Pancreas (tissue), 10 donors: ENCODE measurements at regions of chr19 and their contacts with region 1.

Region 1: DNA sequence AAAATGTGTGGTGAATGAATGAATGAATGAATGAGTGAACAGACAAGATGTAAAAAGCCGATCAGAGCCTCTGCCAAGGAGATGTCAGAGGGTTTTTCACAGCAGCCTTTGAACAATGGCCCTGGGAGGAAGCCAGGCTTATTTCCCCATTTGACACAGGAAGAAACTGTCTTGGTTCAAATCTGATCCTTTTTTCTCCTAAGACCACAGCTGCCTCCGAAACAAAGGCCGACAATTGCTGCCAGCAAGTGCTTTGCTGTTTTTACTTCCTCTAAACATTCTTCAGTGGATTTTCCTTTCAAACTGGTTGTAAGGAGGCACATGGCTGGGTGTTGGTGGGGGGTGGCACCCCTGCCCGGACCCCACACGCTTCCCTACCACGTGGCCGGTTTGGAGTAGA is 44.2 kb upstream of the HOMER3 start:
- DNase-seq: no peak
- ATAC-seq: peak in 1 of 4 donors; percentile 44
- H3K4me3 ChIP-seq: no peak overlapping the region
- H3K27ac ChIP-seq: peak overlapping the region in 1 of 4 donors; percentile 30
- H3K4me1 ChIP-seq: no peaks in the 10 kb centered on the region
- H3K27me3 ChIP-seq: no peaks in the 10 kb centered on the region
- CTCF ChIP-seq: no peak

Region 2: DNA sequence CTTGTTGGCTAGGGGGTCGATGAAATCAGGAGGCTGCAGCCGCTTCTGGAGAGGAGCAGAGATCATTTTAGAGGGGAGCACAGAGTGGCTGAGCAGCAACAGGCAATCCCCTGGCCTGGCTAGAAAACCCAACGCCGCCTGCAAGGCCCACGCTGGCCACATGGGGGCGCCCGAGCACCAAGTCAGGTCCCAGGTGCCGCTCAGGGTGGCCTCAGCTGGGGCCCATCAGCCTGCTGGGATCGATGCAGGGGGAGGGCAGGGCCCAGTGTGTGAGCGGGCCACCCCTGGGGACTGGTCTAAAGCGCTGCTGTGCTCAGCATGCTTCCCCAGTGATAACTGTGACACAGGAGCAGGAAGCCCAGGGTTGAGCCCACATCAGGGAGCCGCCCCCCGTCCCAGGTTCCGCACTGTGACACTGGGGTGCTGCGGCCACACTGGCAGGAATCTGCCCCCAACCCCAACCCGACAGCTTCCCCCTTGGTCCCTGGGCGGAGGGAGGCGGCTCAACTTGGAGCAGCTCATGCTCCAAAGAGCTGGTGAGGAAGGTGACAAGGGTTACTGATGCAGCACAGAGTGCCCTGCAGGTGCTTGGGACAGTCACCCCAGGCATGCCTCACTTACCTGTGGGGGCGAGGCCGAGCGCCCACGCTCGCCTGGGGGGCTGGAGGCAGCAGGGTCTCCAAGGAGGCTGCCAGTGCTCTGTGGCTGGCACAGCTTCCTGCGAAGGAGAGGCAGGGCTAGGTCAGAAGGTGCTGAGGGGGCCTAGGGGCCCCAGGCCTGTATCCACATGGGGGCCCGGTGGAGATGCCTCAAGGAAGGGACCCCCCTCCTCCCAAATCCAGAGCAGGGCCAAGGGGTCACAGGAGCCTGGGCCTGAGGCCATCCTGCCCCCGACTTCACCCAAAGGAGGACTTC is 534.1 kb before region 1 on chr19:
- intact Hi-C with region 1: loop called in 1 of 3 experiments (anchors 10 kb)
- DNase-seq: peak in 5 of 6 donors; percentile 79 to 97 (median 91)
- ATAC-seq: peak; percentile 85 to 96 (median 90)
- H3K4me3 ChIP-seq: no peak overlapping the region
- H3K27ac ChIP-seq: no peak overlapping the region
- H3K4me1 ChIP-seq: peaks cover 0 to 4% (median 0%) of the 10 kb centered on the region in 3 donors
- H3K27me3 ChIP-seq: no peaks in the 10 kb centered on the region
- CTCF ChIP-seq: peak; percentile 94 to 99 (median 98)

Region 3: DNA sequence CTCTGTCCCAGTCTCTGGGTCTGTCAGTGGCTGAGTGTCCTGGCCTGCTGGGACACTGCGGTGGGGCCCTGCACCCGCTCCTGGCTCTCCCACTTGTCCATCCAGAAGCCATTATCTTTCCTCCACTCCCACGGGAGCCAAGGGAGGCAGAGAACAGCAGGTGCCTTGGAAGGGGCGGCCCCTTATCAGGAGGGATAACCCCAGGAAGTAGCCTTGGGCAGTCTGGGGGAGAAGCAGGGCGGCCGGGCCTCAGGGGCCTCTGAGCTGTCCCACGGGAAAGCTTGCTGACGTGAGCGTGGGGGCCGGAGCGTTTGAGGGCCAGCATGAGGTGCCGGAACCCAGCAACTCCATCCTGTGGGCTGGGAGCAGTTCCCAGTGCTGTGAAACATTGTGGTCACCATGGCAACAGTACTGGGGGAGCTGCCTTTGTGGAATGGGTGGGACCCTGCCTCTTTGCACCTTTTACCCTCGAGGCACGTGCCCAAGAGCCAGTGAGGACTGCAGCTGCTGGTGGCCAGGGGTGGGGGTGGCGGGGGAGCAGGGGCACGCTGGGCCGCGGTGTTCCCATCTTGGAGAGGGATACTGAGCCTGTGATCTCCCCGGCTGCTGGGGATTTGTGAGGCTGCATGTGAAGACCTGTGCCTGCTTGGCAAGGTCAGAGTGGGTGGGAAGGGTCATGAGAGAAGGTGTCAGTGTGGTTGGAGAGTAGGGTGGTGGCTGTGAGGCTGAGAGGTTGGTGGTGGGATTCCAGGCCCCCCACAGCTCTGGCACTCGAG is 327.5 kb before region 1 on chr19:
- intact Hi-C with region 1: no loop called
- DNase-seq: no peak
- ATAC-seq: peak in 1 of 4 donors; percentile 32
- H3K4me3 ChIP-seq: no peak overlapping the region
- H3K27ac ChIP-seq: no peak overlapping the region
- H3K4me1 ChIP-seq: no peaks in the 10 kb centered on the region
- H3K27me3 ChIP-seq: no peaks in the 10 kb centered on the region
- CTCF ChIP-seq: no peak

Region 4: DNA sequence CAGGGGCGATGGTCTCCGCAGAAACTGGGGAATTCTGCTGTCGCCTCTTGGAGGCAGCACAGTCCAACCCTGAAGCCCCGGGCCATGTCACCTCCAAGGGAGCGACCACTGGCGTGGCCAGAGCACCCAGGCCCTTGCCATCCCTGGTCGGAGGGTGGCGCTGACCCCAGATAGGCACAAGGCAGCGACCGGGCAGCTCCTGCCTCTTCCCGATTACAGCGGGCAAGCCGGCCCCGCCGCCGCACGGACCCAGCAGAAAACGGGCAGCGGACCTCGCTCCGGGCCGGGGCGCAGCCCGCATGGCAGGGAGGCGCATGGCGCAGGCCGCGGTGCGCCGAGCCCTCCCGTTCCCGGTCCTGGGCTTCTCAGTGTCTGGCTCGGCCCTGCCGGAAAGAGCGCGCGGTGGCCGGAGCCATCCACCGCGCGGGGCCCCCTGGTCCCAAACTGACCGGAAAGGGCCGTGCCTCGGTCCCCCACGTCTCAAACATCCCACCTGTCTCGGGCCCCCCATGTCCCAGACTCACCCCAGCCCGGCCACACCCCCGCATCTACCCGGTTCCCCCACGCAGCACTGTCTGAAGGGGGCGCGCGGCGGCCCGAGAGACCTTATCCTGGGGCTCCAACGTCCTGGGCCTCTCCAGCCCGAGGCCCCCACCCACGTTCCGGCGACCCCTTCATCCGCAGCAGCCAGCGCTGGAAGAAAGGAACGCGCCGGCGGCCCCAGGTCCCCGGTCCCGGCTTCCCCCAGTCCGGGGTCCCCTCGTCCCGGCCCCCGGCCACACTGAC is 90.0 kb before region 1 on chr19:
- intact Hi-C with region 1: loop called in 1 of 3 experiments (anchors 10 kb)
- DNase-seq: peak in 2 of 6 donors; percentile 74 to 79
- ATAC-seq: peak; percentile 30 to 75 (median 63)
- H3K4me3 ChIP-seq: peak overlapping the region in 2 of 4 donors; percentile 8 to 35
- H3K27ac ChIP-seq: no peak overlapping the region
- H3K4me1 ChIP-seq: no peaks in the 10 kb centered on the region
- H3K27me3 ChIP-seq: peaks cover 0 to 10% (median 0%) of the 10 kb centered on the region in 4 donors
- CTCF ChIP-seq: no peak